Calu3 (cell line): ENCODE measurements at regions of chr5 and their contacts with region 1.

Region 1: GRCh38 chr5:97838214-97838613 is 655.2 kb upstream of the RIOK2 start:
- DNase-seq: no peak
- H3K4me3 Mint-ChIP-seq: no peak overlapping the region
- H3K27ac Mint-ChIP-seq: no peak overlapping the region
- H3K4me1 Mint-ChIP-seq: no peaks in the 10 kb centered on the region
- H3K27me3 Mint-ChIP-seq: peaks cover 53% of the 10 kb centered on the region
- CTCF ChIP-seq: no peak

Region 2: GRCh38 chr5:97591781-97592180 is 246.4 kb before region 1 on chr5:
- CTCF ChIA-PET with region 1: no interaction called
- intact Hi-C with region 1: loop called (anchors 5 kb)
- DNase-seq: no peak
- H3K4me3 Mint-ChIP-seq: no peak overlapping the region
- H3K27ac Mint-ChIP-seq: no peak overlapping the region
- H3K4me1 Mint-ChIP-seq: no peaks in the 10 kb centered on the region
- H3K27me3 Mint-ChIP-seq: no peaks in the 10 kb centered on the region
- CTCF ChIP-seq: no peak